ENCODE measurements at regions of chr11 and their contacts with region 1.

Region 1: GRCh38 chr11:66842896-66843775 is at the start of gene RCE1:
- DNase-seq: peak; percentile 96
- H3K4me3 ChIP-seq: peak within 1 kb of the TSS; percentile 91
- H3K27ac ChIP-seq: peak within 1 kb of the TSS; percentile 93
- H3K4me1 ChIP-seq: peaks cover 9% of the 10 kb centered on the region
- H3K27me3 ChIP-seq: no peaks in the 10 kb centered on the region
- CTCF ChIP-seq: no peak
- total RNA-seq, gene RCE1: 33.1 and 35.0 TPM in 2 replicates

Region 2: GRCh38 chr11:66790640-66791039 is 52.5 kb before region 1 on chr11:
- CTCF ChIA-PET with region 1: no interaction called
- POLR2A ChIA-PET with region 1: no interaction called
- intact Hi-C with region 1: no loop called
- DNase-seq: no peak
- H3K4me3 ChIP-seq: no peak overlapping the region
- H3K27ac ChIP-seq: no peak overlapping the region
- H3K4me1 ChIP-seq: no peaks in the 10 kb centered on the region
- H3K27me3 ChIP-seq: no peaks in the 10 kb centered on the region
- CTCF ChIP-seq: no peak

Region 3: DNA sequence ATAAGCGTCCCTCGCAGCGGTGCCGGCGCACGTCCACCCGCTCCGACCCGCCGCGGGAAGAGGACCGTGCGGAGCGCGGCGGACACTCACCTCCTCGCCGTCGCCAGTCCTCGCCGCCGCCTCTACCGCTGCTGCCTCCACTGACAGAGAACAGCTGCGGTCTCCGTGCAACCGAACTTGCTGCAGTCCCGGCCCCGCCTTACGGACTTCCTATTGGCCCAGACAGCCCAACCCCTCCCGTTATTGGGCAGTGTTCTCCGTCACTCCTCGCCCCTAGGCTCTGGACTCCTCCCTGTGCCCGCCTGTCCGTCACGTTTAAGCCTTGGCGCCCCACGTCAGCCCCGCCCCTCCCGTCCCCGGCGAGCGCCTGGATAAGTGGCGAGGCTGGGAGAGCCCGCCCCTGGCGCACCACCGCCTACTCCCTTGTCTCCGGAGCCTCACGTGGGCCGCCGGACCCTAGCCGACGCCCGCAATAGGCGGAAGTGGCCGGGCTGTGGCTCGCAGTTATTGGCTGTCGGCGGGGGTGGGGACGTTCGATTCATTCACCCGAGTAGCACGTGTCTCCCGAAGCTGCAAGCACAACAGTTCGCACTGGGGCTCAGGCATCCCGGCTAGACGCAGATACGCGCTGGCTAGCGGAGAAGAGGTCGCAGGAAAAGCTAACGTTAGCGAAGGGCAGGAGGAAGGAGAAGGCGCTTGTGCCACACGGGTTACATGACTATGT is 115.3 kb after region 1 on chr11 and contains the start of gene PC:
- CTCF ChIA-PET with region 1: interaction called, 12 read pairs
- POLR2A ChIA-PET with region 1: no interaction called
- intact Hi-C with region 1: loop called (anchors 5 kb)
- DNase-seq: peak; percentile 100
- H3K4me3 ChIP-seq: peak within 1 kb of the TSS; percentile 69
- H3K27ac ChIP-seq: peak within 1 kb of the TSS; percentile 68
- H3K4me1 ChIP-seq: peaks cover 24% of the 10 kb centered on the region
- H3K27me3 ChIP-seq: no peaks in the 10 kb centered on the region
- CTCF ChIP-seq: no peak
- total RNA-seq, gene PC: 39.1 and 44.5 TPM in 2 replicates

Measured in A673 (cell line).